Dorsolateral prefrontal cortex (tissue), 120 donors: ENCODE measurements at regions of chr1 and their contacts with region 1.

Region 1: DNA sequence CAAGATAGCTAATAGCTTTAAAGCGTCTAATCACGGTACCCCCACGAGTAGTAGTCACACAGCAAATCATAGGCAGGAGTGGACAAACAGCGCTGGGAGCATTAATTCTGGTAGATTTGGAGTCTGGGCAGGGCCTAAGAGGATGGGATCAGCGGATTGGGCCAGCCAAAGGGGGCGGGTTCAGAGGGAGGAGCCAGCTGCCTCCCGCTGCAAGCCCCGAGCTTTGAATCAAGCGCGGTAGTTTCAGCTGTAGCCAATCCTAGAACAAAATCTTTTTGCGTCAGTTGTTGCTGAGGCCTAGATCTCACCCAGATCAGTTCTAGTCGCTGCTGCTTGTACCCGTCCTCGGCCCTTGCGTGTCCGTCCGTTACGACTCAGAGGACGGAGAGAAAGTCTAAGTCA is 576 bp upstream of the NASP start:
- DNase-seq: peak; percentile 84 to 97 (median 96)
- H3K4me3 ChIP-seq: peak overlapping the region; percentile 63 to 100 (median 93)
- H3K27ac ChIP-seq: peak overlapping the region in 58 of 59 donors; percentile 23 to 96 (median 84)
- H3K27me3 ChIP-seq: no peaks in the 10 kb centered on the region
- CTCF ChIP-seq: peak in 6 of 56 donors; percentile 14 to 36 (median 22)

Region 2: GRCh38 chr1:45430490-45430889 is 152.8 kb before region 1 on chr1:
- intact Hi-C with region 1: no loop called
- DNase-seq: no peak
- H3K4me3 ChIP-seq: no peak overlapping the region
- H3K27ac ChIP-seq: no peak overlapping the region
- H3K27me3 ChIP-seq: no peaks in the 10 kb centered on the region
- CTCF ChIP-seq: no peak

Region 3: DNA sequence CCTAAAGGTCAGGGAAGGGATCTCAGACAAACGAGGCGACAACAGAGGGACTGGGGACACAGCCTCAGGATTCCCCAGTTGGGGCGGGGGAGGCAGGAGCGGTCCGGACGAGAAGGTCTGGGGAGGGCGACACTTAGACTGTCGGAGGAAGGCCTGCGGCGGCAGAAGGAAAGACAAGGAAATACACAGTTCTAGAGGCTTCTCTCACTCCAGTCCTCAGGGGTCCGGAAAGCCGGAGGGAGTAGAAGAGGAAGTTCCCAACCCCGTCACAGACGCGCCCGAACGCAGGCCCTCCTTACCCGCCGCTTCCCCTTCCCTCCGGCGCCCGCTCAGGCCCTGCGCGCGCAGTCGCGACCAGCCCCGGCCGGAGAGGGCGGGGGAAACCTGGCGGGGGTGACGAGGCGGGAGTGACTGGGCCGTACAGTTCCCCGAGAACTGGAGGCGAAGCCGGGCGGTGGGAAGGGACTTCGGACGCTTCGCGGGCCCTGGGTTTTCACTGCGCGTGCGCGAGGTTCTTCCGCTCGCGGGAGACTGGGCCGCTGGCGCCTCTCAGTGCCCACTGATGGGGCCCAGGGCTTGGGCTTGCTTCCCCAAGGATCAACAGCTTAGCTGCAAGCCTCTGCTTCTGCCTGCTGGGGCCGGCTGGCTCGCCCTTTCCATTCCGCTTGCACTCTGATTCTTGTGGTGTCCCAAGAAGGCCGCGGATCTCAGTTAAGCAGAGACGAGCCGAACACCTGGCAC is 167.2 kb after region 1 on chr1 and contains the start of gene IPP:
- intact Hi-C with region 1: loop called in 1 of 2 experiments (anchors 1 kb)
- DNase-seq: peak; percentile 87 to 95 (median 92)
- H3K4me3 ChIP-seq: peak within 1 kb of the TSS; percentile 60 to 94 (median 78)
- H3K27ac ChIP-seq: peak within 1 kb of the TSS; percentile 84 to 99 (median 98)
- H3K27me3 ChIP-seq: no peaks in the 10 kb centered on the region
- CTCF ChIP-seq: peak in 54 of 56 donors; percentile 18 to 77 (median 52)
- total RNA-seq, gene IPP: 9.4 to 25.7 (median 16.6) TPM